ENCODE measurements at regions of chr9 and their contacts with region 1.

Region 1: GRCh38 chr9:22079873-22080341 is 70.8 kb upstream of the CDKN2B start:
- DNase-seq: peak; percentile 72
- H3K4me3 Mint-ChIP-seq: peak overlapping the region; percentile 56
- H3K27ac Mint-ChIP-seq: peak overlapping the region; percentile 78
- H3K4me1 Mint-ChIP-seq: peaks cover 54% of the 10 kb centered on the region
- H3K27me3 Mint-ChIP-seq: peaks cover 17% of the 10 kb centered on the region

Region 2: DNA sequence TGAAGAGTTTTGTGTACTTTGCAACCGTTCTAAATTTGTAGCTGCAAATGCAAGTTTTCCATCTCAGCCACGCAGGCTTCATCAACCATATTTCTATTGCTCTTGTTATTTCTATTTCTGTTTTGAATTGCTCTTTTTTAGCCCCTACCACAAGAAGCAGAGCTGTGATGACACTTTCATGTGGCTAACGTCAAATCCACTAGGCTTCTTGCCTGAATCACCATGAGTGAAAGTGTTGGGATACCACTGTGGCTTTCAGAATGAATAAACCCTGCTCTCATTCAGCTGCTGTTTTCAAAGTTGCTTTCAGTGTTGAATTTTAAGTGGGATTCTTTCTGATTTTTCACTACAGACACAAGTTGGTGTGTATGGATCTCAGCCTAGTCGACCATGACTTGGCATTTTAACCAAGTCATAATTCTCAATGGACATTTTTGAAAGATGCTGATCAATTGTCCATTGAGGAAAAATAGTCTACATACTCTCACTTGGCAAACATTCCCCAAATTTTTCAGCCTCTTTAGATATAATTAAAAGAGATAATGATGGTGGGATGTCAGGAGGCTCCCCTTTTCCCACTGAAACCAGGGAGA is 318.5 kb before region 1 on chr9:
- intact Hi-C with region 1: loop called (anchors 1 kb)
- DNase-seq: peak; percentile 46
- H3K4me3 Mint-ChIP-seq: no peak overlapping the region
- H3K27ac Mint-ChIP-seq: peak overlapping the region; percentile 18
- H3K4me1 Mint-ChIP-seq: peaks cover 9% of the 10 kb centered on the region
- H3K27me3 Mint-ChIP-seq: peaks cover 78% of the 10 kb centered on the region

Region 3: GRCh38 chr9:21965401-21965951 is 114.4 kb before region 1 on chr9:
- intact Hi-C with region 1: loop called (anchors 1 kb)
- DNase-seq: peak; percentile 39
- H3K4me3 Mint-ChIP-seq: peak overlapping the region; percentile 43
- H3K27ac Mint-ChIP-seq: peak overlapping the region; percentile 42
- H3K4me1 Mint-ChIP-seq: peaks cover 51% of the 10 kb centered on the region
- H3K27me3 Mint-ChIP-seq: peaks cover 80% of the 10 kb centered on the region

Region 4: DNA sequence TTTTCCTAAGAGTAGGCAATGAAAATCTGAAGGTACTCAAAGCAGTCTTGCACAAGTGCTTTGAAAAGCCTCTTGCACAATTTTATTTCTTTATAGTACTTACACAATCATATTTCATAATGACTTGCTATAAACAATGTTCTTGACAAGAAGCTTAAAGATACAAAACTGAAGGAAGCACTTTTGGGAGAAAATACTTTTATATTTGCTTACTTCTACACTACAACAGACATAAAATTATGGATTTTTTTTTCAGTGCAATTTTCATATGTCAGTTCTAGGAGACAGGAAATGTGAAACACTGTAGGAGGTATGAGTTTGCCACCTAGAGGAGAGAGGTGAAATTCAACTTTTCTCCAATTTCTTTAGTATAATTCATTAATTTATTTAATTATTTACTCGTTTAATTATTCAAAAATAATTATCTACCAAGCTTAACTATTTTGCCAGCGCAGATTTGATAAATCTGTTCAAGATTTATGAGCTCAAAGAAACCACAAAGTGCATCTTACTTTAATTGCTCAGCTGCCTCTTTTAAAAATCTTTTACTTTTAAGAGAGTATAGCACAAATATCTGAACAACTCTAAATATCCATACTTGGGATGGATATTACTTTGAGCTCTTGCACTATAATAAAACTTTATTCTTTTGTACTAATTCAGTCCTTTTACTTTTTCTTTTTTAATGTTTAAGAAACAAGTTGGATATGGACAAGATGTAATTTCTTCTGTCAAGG is 41.8 kb before region 1 on chr9:
- intact Hi-C with region 1: loop called (anchors 5 kb)
- DNase-seq: no peak
- H3K4me3 Mint-ChIP-seq: no peak overlapping the region
- H3K27ac Mint-ChIP-seq: no peak overlapping the region
- H3K4me1 Mint-ChIP-seq: peaks cover 41% of the 10 kb centered on the region
- H3K27me3 Mint-ChIP-seq: peaks cover 30% of the 10 kb centered on the region

Region 5: GRCh38 chr9:22105005-22105722 is 25.3 kb after region 1 on chr9:
- intact Hi-C with region 1: loop called (anchors 1 kb)
- DNase-seq: no peak
- H3K4me3 Mint-ChIP-seq: no peak overlapping the region
- H3K27ac Mint-ChIP-seq: no peak overlapping the region
- H3K4me1 Mint-ChIP-seq: peaks cover 47% of the 10 kb centered on the region
- H3K27me3 Mint-ChIP-seq: peaks cover 27% of the 10 kb centered on the region

Region 6: GRCh38 chr9:22175972-22176545 is 96.2 kb after region 1 on chr9:
- intact Hi-C with region 1: loop called (anchors 1 kb)
- DNase-seq: peak; percentile 5
- H3K4me3 Mint-ChIP-seq: peak overlapping the region; percentile 1
- H3K27ac Mint-ChIP-seq: peak overlapping the region; percentile 51
- H3K4me1 Mint-ChIP-seq: peaks cover 30% of the 10 kb centered on the region
- H3K27me3 Mint-ChIP-seq: peaks cover 10% of the 10 kb centered on the region